ENCODE measurements at regions of chr16 and their contacts with region 1.

Region 1: GRCh38 chr16:1545044-1546040 is 11.9 kb downstream of the TMEM204 start:
- DNase-seq: no peak
- ATAC-seq: peak; percentile 44
- H3K4me3 ChIP-seq: no peak overlapping the region
- H3K27ac ChIP-seq: peak overlapping the region; percentile 74 to 77
- H3K4me1 ChIP-seq: peaks cover 0 to 2% of the 10 kb centered on the region in 2 donors
- H3K27me3 ChIP-seq: no peaks in the 10 kb centered on the region

Region 2: GRCh38 chr16:1509307-1510221 is 35.8 kb before region 1 on chr16:
- intact Hi-C with region 1: loop called in 1 of 2 experiments (anchors 5 kb)
- DNase-seq: peak; percentile 92 to 93
- ATAC-seq: peak; percentile 77
- H3K4me3 ChIP-seq: no peak overlapping the region
- H3K27ac ChIP-seq: peak overlapping the region; percentile 14 to 77
- H3K4me1 ChIP-seq: no peaks in the 10 kb centered on the region
- H3K27me3 ChIP-seq: no peaks in the 10 kb centered on the region

Measured in aorta (tissue), 5 donors.